ENCODE measurements at regions of chr13 and their contacts with region 1.

Region 1: GRCh38 chr13:99386911-99387788 is 80.0 kb upstream of the GPR183 start:
- DNase-seq: peak; percentile 66
- ATAC-seq: peak; percentile 93
- H3K4me3 ChIP-seq: no peak overlapping the region
- H3K27ac ChIP-seq: peak overlapping the region; percentile 41; the same call in 1 of the 2 replicates
- H3K4me1 ChIP-seq: peaks cover 26% of the 10 kb centered on the region
- H3K27me3 ChIP-seq: no peaks in the 10 kb centered on the region
- CTCF ChIP-seq: peak; percentile 95 to 99 (median 96)
- EP300 ChIP-seq: no peak
- POLR2A ChIP-seq: no peak
- RAD21 ChIP-seq: peak; percentile 99

Region 2: DNA sequence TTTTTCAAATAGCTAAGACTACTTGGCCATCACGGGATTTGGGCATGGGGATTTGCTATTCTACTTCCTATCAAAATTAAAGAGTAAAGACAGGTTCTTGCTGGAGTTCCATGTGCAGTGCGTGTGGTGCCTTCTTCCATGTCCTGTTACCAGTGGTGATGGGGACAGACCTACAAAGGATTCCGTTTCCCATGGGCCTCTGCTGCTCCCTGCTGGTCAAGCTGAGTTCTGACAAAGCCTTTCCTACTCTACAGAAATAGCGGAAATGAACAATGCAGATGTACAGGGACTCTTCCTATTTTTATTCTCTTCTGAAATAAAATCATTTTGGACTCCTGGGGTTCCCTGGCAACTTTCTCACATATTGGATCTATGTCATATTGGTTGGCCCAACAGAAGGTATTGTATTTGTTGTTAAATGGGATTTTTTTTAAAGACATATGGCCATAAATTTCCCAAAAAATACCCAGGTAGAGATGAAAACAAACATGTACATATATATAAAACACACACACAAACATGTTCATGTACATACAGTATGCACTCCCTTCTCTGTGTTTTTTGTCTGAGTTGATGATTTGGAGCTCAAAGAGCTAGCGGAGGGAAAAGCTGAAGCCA is 544.2 kb before region 1 on chr13:
- CTCF ChIA-PET with region 1: no interaction called
- POLR2A ChIA-PET with region 1: no interaction called
- RAD21 ChIA-PET with region 1: no interaction called
- SMC1A ChIA-PET with region 1: no interaction called
- in situ Hi-C with region 1: no loop called
- intact Hi-C with region 1: no loop called
- DNase-seq: peak; percentile 38
- ATAC-seq: peak; percentile 93
- H3K4me3 ChIP-seq: no peak overlapping the region
- H3K27ac ChIP-seq: no peak overlapping the region
- H3K4me1 ChIP-seq: no peaks in the 10 kb centered on the region
- H3K27me3 ChIP-seq: no peaks in the 10 kb centered on the region
- CTCF ChIP-seq: peak; percentile 86 to 95 (median 89)
- EP300 ChIP-seq: no peak
- POLR2A ChIP-seq: no peak
- RAD21 ChIP-seq: peak; percentile 83

Region 3: DNA sequence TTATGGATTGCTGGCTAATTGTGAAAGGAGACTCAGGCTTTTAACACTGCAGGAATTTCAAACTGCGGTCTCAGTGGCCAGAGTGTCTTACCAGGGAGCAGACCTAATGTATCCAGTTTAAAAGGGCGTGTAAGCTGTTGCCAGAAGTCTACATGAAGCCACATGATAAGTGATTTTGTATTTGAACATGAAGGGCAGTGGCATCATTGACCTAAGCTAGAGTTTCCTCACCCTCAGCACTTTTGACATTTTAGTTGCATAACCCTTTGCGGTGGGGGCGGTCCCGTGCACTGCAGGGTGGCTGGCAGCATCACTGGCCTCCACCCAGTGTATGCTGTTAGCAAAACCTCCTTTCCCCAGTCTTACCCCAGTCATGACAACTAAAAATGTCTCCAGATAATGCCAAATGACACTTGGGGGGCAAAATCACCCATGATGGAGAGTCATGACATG is 105.3 kb before region 1 on chr13:
- CTCF ChIA-PET with region 1: interaction called, 12 read pairs
- POLR2A ChIA-PET with region 1: interaction called, 7 read pairs
- RAD21 ChIA-PET with region 1: interaction called, 8 read pairs
- SMC1A ChIA-PET with region 1: interaction called, 16 read pairs
- in situ Hi-C with region 1: no loop called
- intact Hi-C with region 1: no loop called
- DNase-seq: no peak
- ATAC-seq: peak; percentile 89
- H3K4me3 ChIP-seq: peak overlapping the region; percentile 8
- H3K27ac ChIP-seq: peak overlapping the region; percentile 79
- H3K4me1 ChIP-seq: peaks cover 53% of the 10 kb centered on the region
- H3K27me3 ChIP-seq: no peaks in the 10 kb centered on the region
- CTCF ChIP-seq: no peak
- EP300 ChIP-seq: no peak
- POLR2A ChIP-seq: no peak
- RAD21 ChIP-seq: no peak

Region 4: DNA sequence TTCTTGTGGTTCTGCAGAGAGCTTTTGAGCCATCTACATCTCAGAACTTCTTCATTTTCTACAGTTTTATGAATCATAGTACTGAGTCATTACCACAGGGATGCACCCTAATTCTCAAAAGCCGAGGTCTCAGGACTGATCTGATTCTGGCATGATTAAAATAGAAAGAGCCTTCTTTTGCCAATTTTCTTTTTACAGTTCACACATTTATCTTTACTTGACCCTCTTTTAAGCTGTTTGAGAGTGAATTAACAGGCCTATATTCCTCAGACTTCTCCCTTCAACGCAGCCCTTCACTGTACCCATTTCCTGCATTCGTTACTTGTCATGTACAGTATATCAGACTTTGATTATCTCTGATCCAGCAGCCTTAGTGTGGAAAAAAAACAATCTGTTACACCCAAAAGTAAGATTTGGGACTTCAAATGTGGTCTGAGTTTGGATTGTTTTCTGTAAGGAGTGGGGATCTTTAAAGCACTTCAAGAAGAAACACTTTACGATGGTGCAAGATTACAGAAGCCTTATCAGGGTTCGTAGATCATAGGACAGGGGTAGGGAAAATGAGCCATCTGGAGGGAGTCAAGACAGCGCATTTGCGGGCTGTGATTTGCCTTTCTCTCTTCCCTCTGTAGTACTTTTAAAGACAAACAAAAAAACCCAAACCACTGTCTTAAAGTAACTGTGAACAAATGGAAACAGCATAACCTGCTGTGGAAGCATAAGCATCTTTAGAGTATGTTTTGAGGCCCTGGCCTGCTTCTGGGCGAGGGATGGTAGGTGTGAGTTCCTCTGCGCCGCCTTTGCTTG is 64.7 kb before region 1 on chr13:
- CTCF ChIA-PET with region 1: interaction called, 5 read pairs
- POLR2A ChIA-PET with region 1: no interaction called
- RAD21 ChIA-PET with region 1: interaction called, 13 read pairs
- SMC1A ChIA-PET with region 1: interaction called, 14 read pairs
- in situ Hi-C with region 1: no loop called
- intact Hi-C with region 1: loop called (anchors 1 kb)
- DNase-seq: peak; percentile 85
- ATAC-seq: peak; percentile 92
- H3K4me3 ChIP-seq: peak overlapping the region; percentile 49
- H3K27ac ChIP-seq: peak overlapping the region; percentile 85
- H3K4me1 ChIP-seq: peaks cover 53% of the 10 kb centered on the region
- H3K27me3 ChIP-seq: no peaks in the 10 kb centered on the region
- CTCF ChIP-seq: no peak
- EP300 ChIP-seq: peak; percentile 55 to 84; a peak in 2 of 4 replicates
- POLR2A ChIP-seq: no peak
- RAD21 ChIP-seq: peak; percentile 21; the same call in 1 of the 2 replicates

Region 5: GRCh38 chr13:99374994-99375737 is 12.0 kb before region 1 on chr13:
- CTCF ChIA-PET with region 1: interaction called, 41 read pairs
- POLR2A ChIA-PET with region 1: interaction called, 5 read pairs
- RAD21 ChIA-PET with region 1: interaction called, 20 read pairs
- SMC1A ChIA-PET with region 1: interaction called, 148 read pairs
- in situ Hi-C with region 1: no loop called
- intact Hi-C with region 1: no loop called
- DNase-seq: no peak
- ATAC-seq: peak; percentile 83
- H3K4me3 ChIP-seq: peak overlapping the region; percentile 33; the same call in 1 of the 2 replicates
- H3K27ac ChIP-seq: peak overlapping the region; percentile 94
- H3K4me1 ChIP-seq: peaks cover 66% of the 10 kb centered on the region
- H3K27me3 ChIP-seq: no peaks in the 10 kb centered on the region
- CTCF ChIP-seq: 0 out of 6 replicates have a peak, but pooled peaks of 1 of the 3 experiments have one; percentile 0
- EP300 ChIP-seq: peak; percentile 85 to 91; a peak in 3 of 4 replicates
- POLR2A ChIP-seq: 0 out of 2 replicates have a peak, but pooled peaks have one; percentile 24
- RAD21 ChIP-seq: no peak

Region 6: DNA sequence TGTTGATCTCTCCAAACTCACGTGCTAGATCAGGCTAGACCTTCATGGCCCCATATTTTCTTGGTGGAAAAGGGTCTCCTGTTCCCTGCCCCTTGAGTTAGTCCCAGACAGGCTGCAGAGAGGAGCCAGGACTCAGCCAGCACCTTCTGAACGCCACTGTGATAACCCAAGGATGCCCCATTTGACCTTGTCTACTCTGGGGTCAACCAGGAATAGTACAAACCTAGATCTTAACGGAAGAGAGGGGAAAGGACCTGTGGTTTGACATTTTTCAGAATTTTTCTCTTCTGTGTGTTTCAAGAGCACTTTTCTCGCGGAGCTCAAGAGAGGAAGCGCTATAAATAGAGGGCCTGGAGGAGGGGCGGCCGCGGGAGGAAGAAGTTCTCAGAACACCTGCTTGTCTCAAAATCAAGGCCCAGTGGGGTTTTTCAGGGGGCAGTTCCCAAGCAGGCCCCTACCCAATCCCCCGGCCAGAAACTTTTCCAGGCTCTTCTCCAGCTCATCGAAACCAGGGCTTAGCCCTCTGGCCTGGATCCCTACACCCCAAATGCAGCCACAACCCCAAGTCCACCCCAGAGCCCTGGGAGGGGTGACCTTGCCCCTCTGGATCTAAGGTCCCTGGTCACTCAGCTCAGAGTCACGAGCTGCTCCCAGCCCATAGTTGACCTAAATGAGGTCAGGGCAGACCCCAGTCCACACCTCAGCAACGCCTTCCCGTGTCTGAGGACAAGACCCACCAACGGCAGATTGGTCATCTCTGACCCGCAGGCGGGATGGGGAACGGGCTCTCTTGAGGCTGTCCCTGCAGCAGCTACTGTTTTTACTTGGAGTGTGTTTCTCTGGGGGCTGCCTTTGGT is 38.6 kb after region 1 on chr13:
- CTCF ChIA-PET with region 1: interaction called, 55 read pairs
- POLR2A ChIA-PET with region 1: interaction called, 8 read pairs
- RAD21 ChIA-PET with region 1: interaction called, 33 read pairs
- SMC1A ChIA-PET with region 1: interaction called, 51 read pairs
- in situ Hi-C with region 1: no loop called
- intact Hi-C with region 1: no loop called
- DNase-seq: peak; percentile 90
- ATAC-seq: peak; percentile 71
- H3K4me3 ChIP-seq: peak overlapping the region; percentile 10
- H3K27ac ChIP-seq: peak overlapping the region; percentile 100
- H3K4me1 ChIP-seq: peaks cover 62% of the 10 kb centered on the region
- H3K27me3 ChIP-seq: no peaks in the 10 kb centered on the region
- CTCF ChIP-seq: no peak
- EP300 ChIP-seq: peak; percentile 55 to 89; a peak in 3 of 4 replicates
- POLR2A ChIP-seq: no peak
- RAD21 ChIP-seq: peak; percentile 18; the same call in 1 of the 2 replicates

Region 7: DNA sequence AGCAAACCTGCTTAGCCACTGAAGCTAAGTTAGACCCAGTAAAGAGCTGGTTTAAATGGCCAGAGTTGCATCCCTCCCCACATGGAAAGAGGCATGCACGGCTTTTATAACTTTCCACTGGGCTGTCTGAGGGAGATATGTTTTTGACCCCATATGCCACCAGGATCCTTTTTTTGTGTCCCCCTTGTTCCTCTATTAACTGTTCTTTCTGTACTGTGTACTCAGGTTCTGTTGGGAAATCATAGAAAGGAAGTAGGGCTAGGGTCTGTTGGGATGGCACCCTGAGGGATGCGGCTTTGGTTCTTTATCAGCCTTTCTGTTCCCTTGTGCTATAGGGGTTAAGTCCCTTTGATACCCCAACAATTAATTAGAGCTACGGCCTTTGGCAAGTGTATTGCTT is 101.9 kb after region 1 on chr13:
- CTCF ChIA-PET with region 1: no interaction called
- POLR2A ChIA-PET with region 1: no interaction called
- RAD21 ChIA-PET with region 1: no interaction called
- SMC1A ChIA-PET with region 1: no interaction called
- in situ Hi-C with region 1: no loop called
- intact Hi-C with region 1: no loop called
- DNase-seq: no peak
- ATAC-seq: no peak
- H3K4me3 ChIP-seq: no peak overlapping the region
- H3K27ac ChIP-seq: no peak overlapping the region
- H3K4me1 ChIP-seq: no peaks in the 10 kb centered on the region
- H3K27me3 ChIP-seq: no peaks in the 10 kb centered on the region; a peak in 1 of 4 replicates
- CTCF ChIP-seq: no peak
- EP300 ChIP-seq: no peak
- POLR2A ChIP-seq: no peak
- RAD21 ChIP-seq: no peak

Measured in GM12878 (cell line).